Activated CD4-positive, alpha-beta T cell treated with anti-CD3 and anti-CD28 coated beads for 36 hours (primary cell): ENCODE measurements at regions of chr1 and their contacts with region 1.

Region 1: DNA sequence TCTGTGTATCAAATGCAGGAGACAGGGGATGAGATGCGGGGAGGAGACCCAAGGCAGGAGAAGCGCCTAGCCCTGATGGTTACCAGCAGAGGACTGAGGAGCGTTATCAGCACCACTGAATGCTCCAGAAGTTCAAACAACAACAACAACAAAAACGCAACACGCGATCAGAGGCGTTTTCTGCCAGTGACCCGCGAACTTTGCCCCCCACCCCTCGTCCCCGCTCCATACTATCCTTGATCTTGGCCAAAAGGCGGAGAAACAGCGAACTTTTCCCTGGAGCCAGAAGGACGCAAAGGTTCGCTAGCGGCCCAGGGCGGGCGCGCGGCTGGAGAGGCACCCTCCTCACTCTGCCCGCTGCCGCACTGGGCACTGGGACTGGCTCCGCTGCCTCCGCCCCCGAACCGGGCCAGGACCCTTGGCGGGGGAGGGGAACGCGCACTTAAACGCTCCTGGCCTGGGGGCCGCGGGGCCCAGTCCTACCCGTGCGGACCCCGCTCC is 699 bp downstream of the ECHDC2 start:
- DNase-seq: no peak
- ATAC-seq: no peak
- H3K4me3 Mint-ChIP-seq: peak overlapping the region; percentile 84
- H3K27ac Mint-ChIP-seq: no peak overlapping the region
- H3K4me1 Mint-ChIP-seq: peaks cover 27% of the 10 kb centered on the region
- H3K27me3 Mint-ChIP-seq: no peaks in the 10 kb centered on the region

Region 2: GRCh38 chr1:52141513-52142219 is 779.2 kb before region 1 on chr1 and contains the start of gene ZFYVE9:
- CTCF ChIA-PET with region 1: no interaction called
- POLR2A ChIA-PET with region 1: no interaction called
- intact Hi-C with region 1: loop called in 1 of 2 experiments (anchors 5 kb)
- DNase-seq: peak; percentile 83
- ATAC-seq: peak; percentile 62
- H3K4me3 Mint-ChIP-seq: peak within 1 kb of the TSS; percentile 80
- H3K27ac Mint-ChIP-seq: peak within 1 kb of the TSS; percentile 84
- H3K4me1 Mint-ChIP-seq: peaks cover 43% of the 10 kb centered on the region
- H3K27me3 Mint-ChIP-seq: peaks cover 9% of the 10 kb centered on the region
- total RNA-seq, gene ZFYVE9: 4.3 to 4.7 TPM

Region 3: DNA sequence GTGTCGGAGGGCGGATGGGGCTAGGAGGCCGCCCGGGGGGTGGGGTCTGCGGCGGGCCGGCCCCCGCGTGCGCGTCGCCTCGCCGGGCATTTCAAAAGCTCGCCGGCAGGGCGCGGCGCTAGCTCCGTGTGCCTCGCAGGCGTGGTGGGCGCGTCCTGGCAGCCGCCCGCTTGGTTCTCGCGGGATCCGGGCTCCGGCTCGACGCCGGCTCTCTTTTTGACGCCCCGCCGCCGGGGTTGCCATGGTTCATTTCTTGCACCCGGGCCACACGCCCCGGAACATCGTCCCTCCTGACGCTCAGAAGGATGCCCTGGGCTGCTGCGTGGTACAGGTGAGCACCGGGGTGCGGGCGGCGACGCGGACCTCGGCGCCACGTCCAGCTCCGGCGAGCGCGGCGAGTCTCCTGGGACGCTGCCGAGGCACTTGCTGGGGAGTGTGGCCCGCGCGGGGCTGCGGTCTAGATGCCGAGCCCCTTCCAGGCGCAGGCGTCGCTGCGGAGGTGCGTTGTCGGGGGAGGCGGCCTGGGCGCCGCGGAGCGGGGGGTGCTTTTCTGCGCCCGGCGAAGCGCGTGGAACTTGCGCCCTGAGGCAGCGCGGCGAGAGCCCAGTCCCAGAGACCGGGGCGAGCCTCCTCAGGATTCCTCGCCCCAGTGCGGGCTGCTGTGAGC is 78.1 kb before region 1 on chr1 and contains the start of gene ZYG11A:
- CTCF ChIA-PET with region 1: interaction called, 6 read pairs
- POLR2A ChIA-PET with region 1: interaction called, 4 read pairs
- intact Hi-C with region 1: loop called in 1 of 2 experiments (anchors 1 kb)
- DNase-seq: peak; percentile 89
- ATAC-seq: peak; percentile 98
- H3K4me3 Mint-ChIP-seq: peak within 1 kb of the TSS; percentile 58
- H3K27ac Mint-ChIP-seq: no peak within 1 kb of the TSS
- H3K4me1 Mint-ChIP-seq: peaks cover 5% of the 10 kb centered on the region
- H3K27me3 Mint-ChIP-seq: peaks cover 18% of the 10 kb centered on the region
- total RNA-seq, gene ZYG11A: 0.11 to 0.25 TPM